CD8-positive, alpha-beta memory T cell (primary cell): ENCODE measurements at regions of chr4 and their contacts with region 1.

Region 1: DNA sequence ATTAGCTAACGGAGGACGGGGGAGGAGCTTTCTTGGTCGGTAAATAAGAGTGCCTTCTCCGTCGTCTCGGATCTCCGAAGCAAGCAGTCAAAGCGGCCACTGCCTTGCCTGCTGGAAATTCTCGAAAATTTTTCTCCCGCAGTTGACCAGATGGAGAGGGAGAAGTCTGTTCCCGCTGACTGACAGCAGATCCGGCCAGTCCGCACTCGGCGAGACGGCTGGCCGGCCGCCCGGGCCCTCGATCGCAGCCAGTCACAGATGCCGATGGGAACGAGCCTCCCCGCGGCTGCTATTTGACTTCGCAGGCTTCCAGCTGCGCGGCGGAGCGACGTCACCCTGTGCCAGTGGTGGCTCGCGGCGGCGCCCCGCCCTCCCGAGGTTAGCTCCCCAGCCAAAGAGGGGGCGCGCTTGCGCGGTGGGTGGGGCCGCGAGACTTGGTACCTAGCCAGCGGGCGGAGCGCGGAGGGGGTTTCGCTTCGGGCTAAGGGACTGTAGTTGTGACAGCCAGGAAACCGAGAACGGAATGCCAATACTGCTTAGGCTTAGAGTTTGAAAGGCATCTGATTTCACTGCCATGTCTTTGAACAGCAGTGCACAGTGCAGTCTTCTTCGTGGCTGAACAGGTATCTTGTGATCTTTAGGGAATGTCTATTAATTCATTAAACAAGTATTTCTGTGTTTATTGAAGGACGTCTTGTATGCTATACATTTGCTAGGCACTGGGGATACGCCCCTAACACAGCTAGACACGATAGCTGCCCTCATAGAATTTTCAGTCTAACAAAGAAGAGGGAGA is at the start of gene PPM1K:
- DNase-seq: peak; percentile 99 to 100 (median 99)
- H3K4me3 ChIP-seq: peak within 1 kb of the TSS; percentile 91
- H3K4me3 Mint-ChIP-seq: peak within 1 kb of the TSS; percentile 90 to 98 (median 94)
- H3K27ac ChIP-seq: peak within 1 kb of the TSS; percentile 99
- H3K27ac Mint-ChIP-seq: peak within 1 kb of the TSS; percentile 97 to 100 (median 99)
- H3K4me1 ChIP-seq: peaks cover 40% of the 10 kb centered on the region
- H3K4me1 Mint-ChIP-seq: peaks cover 43 to 49% (median 48%) of the 10 kb centered on the region in 3 donors
- H3K27me3 ChIP-seq: no peaks in the 10 kb centered on the region
- H3K27me3 Mint-ChIP-seq: peaks cover 0 to 1% of the 10 kb centered on the region in 2 donors
- total RNA-seq, gene PPM1K: 38.2 to 44.3 TPM

Region 2: DNA sequence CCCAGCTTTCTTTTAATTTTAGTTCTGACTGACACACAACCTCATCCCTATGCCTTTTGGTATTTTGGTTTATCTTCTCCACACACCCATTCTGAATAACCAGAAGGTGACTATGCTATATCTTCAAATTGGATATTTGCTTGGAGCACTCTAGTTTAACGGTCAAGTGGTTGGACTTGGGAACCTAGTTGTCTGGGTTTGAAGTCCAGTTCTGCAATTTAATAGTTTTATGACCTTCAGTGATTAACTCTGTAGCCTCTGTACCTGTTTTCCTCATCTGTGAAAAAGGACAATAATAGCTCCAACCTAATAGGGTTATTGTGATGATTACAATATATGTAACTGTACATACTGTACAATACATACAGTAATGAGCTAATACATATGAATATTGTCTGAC is 20.3 kb before region 1 on chr4:
- CTCF ChIA-PET with region 1: interaction called, 10 read pairs
- POLR2A ChIA-PET with region 1: no interaction called
- DNase-seq: no peak
- H3K4me3 ChIP-seq: no peak overlapping the region
- H3K4me3 Mint-ChIP-seq: no peak overlapping the region
- H3K27ac ChIP-seq: no peak overlapping the region
- H3K27ac Mint-ChIP-seq: peak overlapping the region in 1 of 8 donors; percentile 16
- H3K4me1 ChIP-seq: no peaks in the 10 kb centered on the region
- H3K4me1 Mint-ChIP-seq: peaks cover 0 to 1% (median 0%) of the 10 kb centered on the region in 3 donors
- H3K27me3 ChIP-seq: no peaks in the 10 kb centered on the region
- H3K27me3 Mint-ChIP-seq: no peaks in the 10 kb centered on the region

Region 3: GRCh38 chr4:88320780-88321373 is 36.2 kb after region 1 on chr4:
- CTCF ChIA-PET with region 1: interaction called, 5 read pairs
- POLR2A ChIA-PET with region 1: interaction called, 19 read pairs
- DNase-seq: peak in 2 of 5 donors; percentile 14 to 33
- H3K4me3 ChIP-seq: peak overlapping the region; percentile 37
- H3K4me3 Mint-ChIP-seq: peak overlapping the region; percentile 39 to 84 (median 79)
- H3K27ac ChIP-seq: no peak overlapping the region
- H3K27ac Mint-ChIP-seq: peak overlapping the region; percentile 55 to 96 (median 92)
- H3K4me1 ChIP-seq: peaks cover 10% of the 10 kb centered on the region
- H3K4me1 Mint-ChIP-seq: peaks cover 20 to 24% (median 23%) of the 10 kb centered on the region in 3 donors
- H3K27me3 ChIP-seq: no peaks in the 10 kb centered on the region
- H3K27me3 Mint-ChIP-seq: no peaks in the 10 kb centered on the region

Region 4: GRCh38 chr4:88456757-88457306 is 172.2 kb after region 1 on chr4 and contains the start of gene HERC5:
- CTCF ChIA-PET with region 1: interaction called, 24 read pairs
- POLR2A ChIA-PET with region 1: interaction called, 71 read pairs
- DNase-seq: peak; percentile 88 to 95 (median 93)
- H3K4me3 ChIP-seq: peak within 1 kb of the TSS; percentile 97
- H3K4me3 Mint-ChIP-seq: peak within 1 kb of the TSS; percentile 95 to 100 (median 98)
- H3K27ac ChIP-seq: peak within 1 kb of the TSS; percentile 64
- H3K27ac Mint-ChIP-seq: peak within 1 kb of the TSS; percentile 87 to 100 (median 100)
- H3K4me1 ChIP-seq: peaks cover 16% of the 10 kb centered on the region
- H3K4me1 Mint-ChIP-seq: peaks cover 25 to 61% (median 31%) of the 10 kb centered on the region in 3 donors
- H3K27me3 ChIP-seq: no peaks in the 10 kb centered on the region
- H3K27me3 Mint-ChIP-seq: no peaks in the 10 kb centered on the region
- total RNA-seq, gene HERC5: 7.0 to 8.3 TPM

Region 5: GRCh38 chr4:88591787-88592599 is 307.4 kb after region 1 on chr4 and contains the start of gene HERC3:
- CTCF ChIA-PET with region 1: no interaction called
- POLR2A ChIA-PET with region 1: interaction called, 11 read pairs
- DNase-seq: peak; percentile 84 to 92 (median 88)
- H3K4me3 ChIP-seq: peak within 1 kb of the TSS; percentile 94
- H3K4me3 Mint-ChIP-seq: peak within 1 kb of the TSS; percentile 92 to 98 (median 96)
- H3K27ac ChIP-seq: peak within 1 kb of the TSS; percentile 82
- H3K27ac Mint-ChIP-seq: peak within 1 kb of the TSS; percentile 84 to 99 (median 96)
- H3K4me1 ChIP-seq: peaks cover 28% of the 10 kb centered on the region
- H3K4me1 Mint-ChIP-seq: peaks cover 34 to 50% (median 50%) of the 10 kb centered on the region in 3 donors
- H3K27me3 ChIP-seq: no peaks in the 10 kb centered on the region
- H3K27me3 Mint-ChIP-seq: no peaks in the 10 kb centered on the region
- total RNA-seq, gene HERC3: 27.9 to 31.8 TPM